ENCODE measurements at regions of chr14 and their contacts with region 1.

Region 1: DNA sequence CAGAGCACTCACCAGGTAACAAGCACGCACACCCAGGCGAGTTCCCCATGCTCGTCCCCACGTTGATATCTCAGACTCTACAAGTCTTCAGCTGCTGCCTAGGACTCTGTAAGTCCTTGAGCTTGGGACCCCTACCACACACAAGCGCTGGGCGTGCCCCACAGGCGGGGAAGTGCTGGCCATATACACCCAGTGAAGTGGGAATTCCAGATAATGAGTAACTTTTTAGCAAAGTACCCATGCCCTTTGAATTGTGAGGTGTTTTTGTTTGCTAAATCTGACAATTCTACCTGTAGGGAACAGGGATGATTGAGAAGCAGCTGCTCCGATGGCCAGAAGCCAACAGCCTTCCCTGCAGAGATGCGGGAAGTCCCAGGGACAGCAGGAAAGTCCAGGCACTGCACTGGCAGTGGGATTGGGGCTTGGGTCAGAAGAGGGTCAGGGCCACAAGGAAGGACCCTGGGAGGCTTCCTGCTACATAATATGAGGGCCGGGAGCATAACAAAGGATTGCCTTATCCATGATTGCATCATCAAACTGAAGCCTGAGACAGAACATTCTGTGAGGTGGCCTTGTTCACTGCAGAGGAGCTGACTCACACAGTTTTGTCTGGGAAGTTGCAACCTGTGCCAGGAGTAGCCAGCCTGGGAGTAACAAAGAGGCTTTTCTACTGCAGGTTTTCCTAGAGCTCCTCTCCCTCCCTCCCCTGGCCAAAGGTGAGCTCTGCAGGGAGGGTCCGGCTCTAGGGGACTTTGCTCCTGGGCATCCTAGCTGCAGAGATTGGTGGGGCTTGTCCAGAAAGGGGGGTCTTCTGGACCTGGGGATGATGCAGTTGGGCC is 13.2 kb upstream of the SERPINA3 start:
- DNase-seq: peak; percentile 96
- ATAC-seq: peak; percentile 85
- H3K4me3 ChIP-seq: peak overlapping the region; percentile 23 to 28
- H3K27ac ChIP-seq: peak overlapping the region; percentile 68
- H3K4me1 ChIP-seq: peaks cover 36 to 55% of the 10 kb centered on the region in 2 experiments
- H3K27me3 ChIP-seq: no peaks in the 10 kb centered on the region
- CTCF ChIP-seq: peak in 2 of 3 experiments; percentile 38 to 45; a peak in 3 of 6 replicates
- POLR2A ChIP-seq: no peak
- RAD21 ChIP-seq: no peak

Region 2: GRCh38 chr14:93490001-93490400 is 1109.0 kb before region 1 on chr14:
- CTCF ChIA-PET with region 1: no interaction called
- POLR2A ChIA-PET with region 1: no interaction called
- RAD21 ChIA-PET with region 1: no interaction called
- intact Hi-C with region 1: no loop called
- DNase-seq: no peak
- ATAC-seq: no peak
- H3K4me3 ChIP-seq: no peak overlapping the region
- H3K27ac ChIP-seq: no peak overlapping the region
- H3K4me1 ChIP-seq: no peaks in the 10 kb centered on the region
- H3K27me3 ChIP-seq: no peaks in the 10 kb centered on the region
- CTCF ChIP-seq: no peak
- POLR2A ChIP-seq: no peak
- RAD21 ChIP-seq: no peak

Region 3: DNA sequence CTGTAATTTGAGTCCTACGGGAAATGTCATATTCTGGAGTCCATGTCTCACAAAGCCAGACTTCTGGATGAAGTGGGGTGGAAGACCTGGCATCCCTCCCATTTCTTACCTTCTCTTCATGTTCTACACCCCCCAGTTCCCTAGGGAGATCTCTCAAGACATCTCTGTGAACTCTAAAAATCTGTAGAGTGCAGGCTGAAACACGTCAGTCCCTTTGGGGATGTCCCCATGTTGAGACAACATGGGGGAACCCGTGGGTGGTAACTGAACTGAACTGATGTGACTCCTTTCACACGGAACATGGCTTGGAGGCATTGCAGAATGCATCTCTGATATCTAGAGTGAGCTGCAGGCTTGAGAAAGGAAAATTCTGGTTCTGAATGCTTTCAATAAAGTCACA is 104.9 kb before region 1 on chr14:
- CTCF ChIA-PET with region 1: no interaction called
- POLR2A ChIA-PET with region 1: no interaction called
- RAD21 ChIA-PET with region 1: no interaction called
- intact Hi-C with region 1: no loop called
- DNase-seq: no peak
- ATAC-seq: no peak
- H3K4me3 ChIP-seq: no peak overlapping the region
- H3K27ac ChIP-seq: no peak overlapping the region
- H3K4me1 ChIP-seq: no peaks in the 10 kb centered on the region
- H3K27me3 ChIP-seq: peaks cover 49% of the 10 kb centered on the region; the same call in 1 of the 2 replicates
- CTCF ChIP-seq: no peak
- POLR2A ChIP-seq: no peak
- RAD21 ChIP-seq: no peak

Region 4: DNA sequence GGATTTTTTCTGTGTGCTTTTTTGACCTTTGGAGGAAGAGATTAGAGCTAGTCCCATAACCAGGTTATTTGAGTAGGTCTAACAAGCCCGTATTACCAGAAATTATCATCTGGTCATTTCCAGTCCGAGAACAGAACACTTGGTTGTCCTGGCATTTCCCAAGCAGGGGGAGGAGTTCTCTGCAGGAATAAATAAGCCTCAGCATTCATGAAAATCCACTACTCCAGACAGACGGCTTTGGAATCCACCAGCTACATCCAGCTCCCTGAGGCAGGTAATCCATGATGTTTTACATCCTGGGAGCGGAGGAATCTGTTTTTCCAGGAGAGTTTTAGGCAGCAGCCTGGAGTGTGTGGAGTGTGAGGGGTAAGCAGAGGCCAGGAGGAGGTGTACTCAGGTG is 13.1 kb after region 1 on chr14 and contains the start of gene SERPINA3:
- CTCF ChIA-PET with region 1: interaction called, 7 read pairs
- POLR2A ChIA-PET with region 1: interaction called, 32 read pairs
- RAD21 ChIA-PET with region 1: no interaction called
- intact Hi-C with region 1: no loop called
- DNase-seq: no peak
- ATAC-seq: no peak
- H3K4me3 ChIP-seq: no peak within 1 kb of the TSS
- H3K27ac ChIP-seq: no peak within 1 kb of the TSS
- H3K4me1 ChIP-seq: peaks cover 8 to 38% of the 10 kb centered on the region in 2 experiments; a peak in 3 of 4 replicates
- H3K27me3 ChIP-seq: no peaks in the 10 kb centered on the region
- CTCF ChIP-seq: no peak
- POLR2A ChIP-seq: no peak
- RAD21 ChIP-seq: no peak
- total RNA-seq, gene SERPINA3: 4.3 TPM